T-cell (primary cell): ENCODE measurements at regions of chr1 and their contacts with region 1.

Region 1: GRCh38 chr1:92944901-92945747 is 16.1 kb downstream of the DIPK1A start:
- DNase-seq: no peak
- ATAC-seq: no peak
- H3K4me3 ChIP-seq: no peak overlapping the region
- H3K4me3 Mint-ChIP-seq: peak overlapping the region in 1 of 3 donors; percentile 39
- H3K27ac ChIP-seq: no peak overlapping the region
- H3K27ac Mint-ChIP-seq: peak overlapping the region in 1 of 2 donors; percentile 33
- H3K4me1 ChIP-seq: peaks cover 16 to 19% of the 10 kb centered on the region in 2 experiments
- H3K4me1 Mint-ChIP-seq: peaks cover 56 to 71% (median 64%) of the 10 kb centered on the region in 3 donors
- H3K27me3 ChIP-seq: no peaks in the 10 kb centered on the region
- H3K27me3 Mint-ChIP-seq: no peaks in the 10 kb centered on the region

Region 2: GRCh38 chr1:92975551-92976232 is 30.6 kb after region 1 on chr1:
- CTCF ChIA-PET with region 1: interaction called, 3 to 11 read pairs
- POLR2A ChIA-PET with region 1: interaction called in 1 of 2 experiments, 3 read pairs
- DNase-seq: no peak
- ATAC-seq: peak in 1 of 4 experiments; percentile 32
- H3K4me3 ChIP-seq: no peak overlapping the region
- H3K4me3 Mint-ChIP-seq: no peak overlapping the region
- H3K27ac ChIP-seq: peak overlapping the region; percentile 9
- H3K27ac Mint-ChIP-seq: peak overlapping the region; percentile 58 to 88
- H3K4me1 ChIP-seq: peaks cover 23 to 35% of the 10 kb centered on the region in 2 experiments
- H3K4me1 Mint-ChIP-seq: peaks cover 43 to 60% (median 48%) of the 10 kb centered on the region in 3 donors
- H3K27me3 ChIP-seq: no peaks in the 10 kb centered on the region
- H3K27me3 Mint-ChIP-seq: no peaks in the 10 kb centered on the region